ENCODE measurements at regions of chr1 and their contacts with region 1.

Region 1: GRCh38 chr1:26321315-26322041 is 3.7 kb downstream of the CD52 start:
- DNase-seq: peak; percentile 88
- H3K4me3 Mint-ChIP-seq: no peak overlapping the region
- H3K27ac Mint-ChIP-seq: peak overlapping the region; percentile 3
- H3K4me1 Mint-ChIP-seq: peaks cover 8% of the 10 kb centered on the region
- H3K27me3 Mint-ChIP-seq: no peaks in the 10 kb centered on the region
- CTCF ChIP-seq: peak; percentile 89

Region 2: DNA sequence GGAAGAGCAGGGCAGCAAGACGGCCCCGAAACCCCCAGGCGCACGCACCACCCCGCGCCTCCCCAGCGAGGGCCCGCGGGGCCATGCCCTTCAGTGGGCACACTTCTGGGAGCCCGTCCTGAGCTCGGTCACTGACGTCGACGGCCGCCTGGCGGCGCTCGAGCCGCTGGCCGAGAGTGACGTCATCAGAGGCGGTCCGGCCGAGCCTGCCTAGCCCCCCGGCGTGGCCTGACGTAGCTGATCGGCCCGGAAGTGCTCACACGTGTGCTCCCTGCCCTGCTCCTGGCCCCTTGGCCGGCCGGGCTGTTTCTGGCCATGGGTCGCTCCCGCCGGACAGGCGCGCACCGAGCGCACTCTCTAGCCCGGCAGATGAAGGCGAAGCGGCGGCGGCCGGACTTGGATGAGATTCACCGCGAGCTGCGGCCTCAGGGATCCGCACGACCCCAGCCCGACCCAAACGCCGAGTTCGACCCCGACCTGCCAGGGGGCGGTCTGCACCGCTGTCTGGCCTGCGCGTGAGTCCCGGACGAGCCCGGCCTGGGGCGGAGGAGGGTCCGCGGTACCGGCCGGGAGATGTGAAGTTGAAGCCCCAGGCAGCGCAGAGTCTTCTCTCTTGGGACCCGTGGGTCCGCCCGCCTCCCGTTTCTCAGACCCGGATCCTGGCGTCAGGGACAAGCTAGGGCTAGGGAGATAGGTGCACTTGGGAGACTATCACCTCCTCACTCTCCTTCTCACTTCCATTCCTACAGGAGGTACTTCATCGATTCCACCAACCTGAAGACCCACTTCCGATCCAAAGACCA is 151.6 kb before region 1 on chr1 and contains the start of gene ZNF593:
- CTCF ChIA-PET with region 1: interaction called, 7 read pairs
- POLR2A ChIA-PET with region 1: interaction called, 4 read pairs
- intact Hi-C with region 1: loop called (anchors 1 kb)
- DNase-seq: peak; percentile 86
- H3K4me3 Mint-ChIP-seq: peak within 1 kb of the TSS; percentile 86
- H3K27ac Mint-ChIP-seq: peak within 1 kb of the TSS; percentile 93
- H3K4me1 Mint-ChIP-seq: no peaks in the 10 kb centered on the region
- H3K27me3 Mint-ChIP-seq: no peaks in the 10 kb centered on the region
- CTCF ChIP-seq: peak; percentile 91
- total RNA-seq, gene ZNF593: 61.5 and 82.6 TPM in 2 replicates

Region 3: GRCh38 chr1:26210147-26210870 is 111.2 kb before region 1 on chr1:
- CTCF ChIA-PET with region 1: no interaction called
- POLR2A ChIA-PET with region 1: no interaction called
- intact Hi-C with region 1: no loop called
- DNase-seq: no peak
- H3K4me3 Mint-ChIP-seq: no peak overlapping the region
- H3K27ac Mint-ChIP-seq: no peak overlapping the region
- H3K4me1 Mint-ChIP-seq: no peaks in the 10 kb centered on the region
- H3K27me3 Mint-ChIP-seq: peaks cover 12% of the 10 kb centered on the region
- CTCF ChIP-seq: no peak

Region 4: GRCh38 chr1:26284597-26285360 is 36.7 kb before region 1 on chr1:
- CTCF ChIA-PET with region 1: interaction called, 51 read pairs
- POLR2A ChIA-PET with region 1: interaction called, 3 read pairs
- intact Hi-C with region 1: loop called (anchors 1 kb)
- DNase-seq: peak; percentile 89
- H3K4me3 Mint-ChIP-seq: no peak overlapping the region
- H3K27ac Mint-ChIP-seq: peak overlapping the region; percentile 8
- H3K4me1 Mint-ChIP-seq: peaks cover 40% of the 10 kb centered on the region
- H3K27me3 Mint-ChIP-seq: no peaks in the 10 kb centered on the region
- CTCF ChIP-seq: peak; percentile 82

Region 5: DNA sequence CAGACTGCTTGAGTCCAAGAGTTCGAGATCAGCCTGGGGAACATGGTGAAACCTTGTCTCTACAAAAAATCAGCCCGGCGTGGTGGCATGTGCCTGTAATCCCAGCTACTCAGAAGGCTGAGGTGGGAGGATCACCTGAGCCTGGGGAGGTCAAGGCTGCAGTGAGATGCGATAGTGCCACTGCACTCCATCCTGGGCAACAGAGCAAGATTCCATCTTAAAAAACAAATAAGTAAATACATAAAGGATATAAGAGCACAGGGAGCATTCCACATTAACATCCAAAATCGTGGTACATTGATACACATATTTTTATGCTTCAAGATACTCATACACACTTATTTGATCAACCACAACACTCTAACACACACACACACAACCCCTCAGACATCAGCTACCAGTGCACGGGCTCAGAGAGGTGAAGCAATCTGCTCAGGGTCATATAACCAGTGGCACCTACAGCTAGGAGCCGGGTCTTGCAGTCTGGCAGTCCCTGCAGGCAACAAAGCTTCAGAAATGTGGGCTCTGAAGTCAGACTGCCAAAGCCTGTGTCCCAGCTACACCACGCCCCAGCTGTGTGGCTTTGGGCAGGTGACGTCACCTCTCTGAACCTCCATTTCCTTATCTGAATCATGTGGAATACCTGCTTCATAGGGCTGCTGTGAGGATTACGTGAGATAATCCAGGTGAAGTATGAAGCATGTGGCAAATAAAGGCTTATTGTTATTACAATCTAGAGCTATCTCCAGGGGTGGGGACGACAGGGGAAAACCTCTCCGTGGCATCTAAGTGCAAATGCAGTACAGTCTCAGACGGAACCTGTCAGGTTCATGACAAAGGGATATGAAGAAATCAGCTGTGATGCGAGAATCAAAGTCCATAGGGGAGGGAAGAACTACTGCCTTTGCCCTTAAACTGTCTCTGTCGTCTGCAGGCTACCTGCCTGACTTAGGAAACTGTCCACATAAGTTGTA is 37.2 kb after region 1 on chr1:
- CTCF ChIA-PET with region 1: interaction called, 6 read pairs
- POLR2A ChIA-PET with region 1: no interaction called
- intact Hi-C with region 1: loop called (anchors 5 kb)
- DNase-seq: peak; percentile 61
- H3K4me3 Mint-ChIP-seq: no peak overlapping the region
- H3K27ac Mint-ChIP-seq: no peak overlapping the region
- H3K4me1 Mint-ChIP-seq: peaks cover 33% of the 10 kb centered on the region
- H3K27me3 Mint-ChIP-seq: no peaks in the 10 kb centered on the region
- CTCF ChIP-seq: no peak

Region 6: GRCh38 chr1:26417111-26417759 is 95.8 kb after region 1 on chr1:
- CTCF ChIA-PET with region 1: interaction called, 10 read pairs
- POLR2A ChIA-PET with region 1: no interaction called
- intact Hi-C with region 1: no loop called
- DNase-seq: peak; percentile 76
- H3K4me3 Mint-ChIP-seq: no peak overlapping the region
- H3K27ac Mint-ChIP-seq: no peak overlapping the region
- H3K4me1 Mint-ChIP-seq: no peaks in the 10 kb centered on the region
- H3K27me3 Mint-ChIP-seq: peaks cover 65% of the 10 kb centered on the region
- CTCF ChIP-seq: peak; percentile 83